ENCODE measurements at regions of chr20 and their contacts with region 1.

Region 1: DNA sequence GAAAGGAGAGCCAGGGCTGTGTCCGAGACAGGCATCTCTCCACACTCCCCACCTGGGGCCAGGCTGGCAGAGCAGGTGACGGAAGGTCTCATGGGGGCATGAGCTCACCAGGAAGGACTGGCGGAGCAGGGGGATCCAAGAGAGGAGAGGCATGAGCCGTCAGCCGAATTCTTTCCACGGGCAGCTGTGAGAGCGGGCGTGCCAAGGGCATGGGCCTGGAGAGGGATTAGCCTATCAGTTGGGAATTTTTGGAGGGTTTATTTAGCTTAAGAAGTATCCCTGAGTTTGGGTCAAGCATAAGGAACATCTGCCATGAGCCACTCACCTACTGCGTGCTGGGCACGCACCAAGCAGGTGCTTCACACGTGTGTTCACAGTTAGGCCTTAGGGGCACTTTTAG is 60.2 kb upstream of the ZNFX1 start:
- ATAC-seq: no peak
- H3K4me3 ChIP-seq: no peak overlapping the region
- H3K27ac ChIP-seq: no peak overlapping the region
- H3K4me1 ChIP-seq: no peaks in the 10 kb centered on the region

Region 2: GRCh38 chr20:49219089-49219923 is 118.8 kb before region 1 on chr20 and contains the start of gene DDX27:
- in situ Hi-C with region 1: no loop called
- ATAC-seq: peak; percentile 94 to 98 (median 95)
- H3K4me3 ChIP-seq: peak within 1 kb of the TSS; percentile 60 to 94 (median 64)
- H3K27ac ChIP-seq: peak within 1 kb of the TSS; percentile 67 to 78
- H3K4me1 ChIP-seq: peaks cover 9 to 10% of the 10 kb centered on the region in 2 donors
- total RNA-seq, gene DDX27: 15.2 to 49.1 (median 23.8) TPM

Region 3: GRCh38 chr20:49484180-49485140 is 146.4 kb after region 1 on chr20:
- in situ Hi-C with region 1: loop called in 2 of 9 experiments (anchors 10 to 25 kb)
- ATAC-seq: peak; percentile 90 to 94 (median 92)
- H3K4me3 ChIP-seq: peak overlapping the region; percentile 41 to 60 (median 48)
- H3K27ac ChIP-seq: no peak overlapping the region
- H3K4me1 ChIP-seq: no peaks in the 10 kb centered on the region

Region 4: DNA sequence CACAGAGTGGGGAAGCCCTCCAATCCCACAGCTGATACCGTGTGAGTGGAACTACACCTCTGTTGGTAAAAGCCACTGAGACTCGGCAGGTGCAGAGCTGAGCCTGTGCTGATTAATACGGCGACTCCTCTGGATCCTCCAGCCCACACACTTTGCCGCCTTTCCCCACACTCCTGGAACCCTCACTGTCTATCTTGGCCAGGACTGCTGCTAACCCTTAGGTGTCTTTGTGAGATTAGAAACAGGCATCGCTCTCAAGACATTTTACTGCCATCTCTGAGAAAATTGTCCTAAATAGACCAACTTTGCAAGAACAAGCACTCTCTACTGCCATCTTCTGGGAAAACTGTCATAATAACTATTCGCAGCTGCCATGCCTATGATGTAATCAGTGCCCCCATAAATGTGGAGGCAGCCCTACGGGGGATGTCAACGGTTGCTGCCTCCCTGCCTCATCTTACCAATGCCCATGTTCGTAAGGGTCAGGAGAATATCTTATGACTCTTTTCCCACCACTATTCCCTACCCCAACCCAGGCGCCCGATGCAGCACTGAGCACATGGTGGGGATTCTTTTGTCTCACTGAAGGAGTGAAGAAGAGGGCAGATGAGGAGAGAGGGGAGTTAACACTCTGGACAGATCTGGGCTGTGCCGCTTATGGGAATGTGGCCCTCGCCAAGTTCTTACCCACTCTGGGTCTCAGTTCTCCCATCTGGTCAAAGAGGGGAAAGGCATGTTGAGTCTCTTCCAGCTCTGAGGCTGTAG is 170.6 kb after region 1 on chr20:
- in situ Hi-C with region 1: loop called in 6 of 9 experiments (anchors 10 to 25 kb)
- ATAC-seq: peak in 6 of 8 experiments; percentile 20 to 89 (median 54)
- H3K4me3 ChIP-seq: no peak overlapping the region
- H3K27ac ChIP-seq: no peak overlapping the region
- H3K4me1 ChIP-seq: peaks cover 10 to 14% of the 10 kb centered on the region in 2 donors

Region 5: DNA sequence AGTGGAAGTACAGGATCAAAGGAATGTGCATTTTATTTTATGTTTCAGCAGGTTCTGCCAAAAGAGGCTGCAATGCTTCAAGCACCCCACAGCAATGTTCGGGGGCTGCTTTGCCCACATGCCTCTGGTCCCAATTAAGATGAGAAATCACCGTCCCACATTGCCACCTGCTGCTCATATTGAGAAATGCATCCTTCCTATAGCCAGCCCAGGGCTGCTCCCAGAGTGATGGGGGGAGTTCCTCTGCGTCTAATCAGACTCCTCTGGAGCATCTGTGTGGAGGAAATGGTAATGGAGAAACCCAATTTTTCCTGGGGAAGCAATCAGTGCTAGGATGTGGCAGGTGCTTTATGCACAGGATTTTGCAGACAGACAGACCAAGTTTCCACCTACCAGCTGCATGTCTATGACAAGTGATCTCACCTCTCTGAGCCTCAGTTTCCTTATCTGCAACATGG is 196.2 kb after region 1 on chr20:
- in situ Hi-C with region 1: loop called in 3 of 9 experiments (anchors 10 kb)
- ATAC-seq: peak; percentile 79 to 93 (median 85)
- H3K4me3 ChIP-seq: no peak overlapping the region
- H3K27ac ChIP-seq: no peak overlapping the region
- H3K4me1 ChIP-seq: no peaks in the 10 kb centered on the region

Measured in motor neuron (in vitro differentiated cells).